OCI-LY7 (cell line): ENCODE measurements at regions of chr2 and their contacts with region 1.

Region 1: DNA sequence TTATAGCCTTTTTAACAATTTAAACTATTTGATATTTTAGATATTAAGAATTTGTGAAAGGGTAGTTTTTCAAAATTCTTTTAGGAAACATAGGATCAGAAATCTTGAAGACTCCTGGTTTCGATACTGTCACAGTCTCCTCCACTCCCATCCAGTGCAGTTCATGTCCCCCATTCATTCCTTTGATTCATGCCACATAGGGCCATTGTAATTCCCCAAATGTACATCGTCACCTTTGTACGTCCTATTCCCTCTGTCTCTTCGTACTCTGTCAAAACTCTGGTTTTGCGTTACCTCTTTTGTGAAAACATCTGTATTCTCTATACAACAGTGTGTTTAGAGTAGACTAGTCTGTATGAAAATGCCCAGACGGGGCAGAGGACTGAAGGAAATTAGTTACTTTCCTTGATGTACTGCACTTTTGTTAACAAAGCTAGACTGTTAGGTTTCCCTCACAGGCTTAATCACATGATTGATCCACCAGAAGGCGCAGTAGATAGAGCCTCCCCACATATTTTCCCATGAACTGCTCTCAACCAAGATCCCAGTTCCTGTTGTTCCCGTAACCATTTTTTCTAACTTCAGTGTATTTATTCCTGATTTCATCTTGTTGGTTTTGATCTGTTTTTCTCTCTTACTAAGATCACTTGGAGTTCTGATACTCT is 2.5 kb downstream of the MRPL35 start:
- DNase-seq: no peak
- H3K4me3 ChIP-seq: peak overlapping the region; percentile 36
- H3K27ac ChIP-seq: peak overlapping the region; percentile 28
- H3K4me1 ChIP-seq: peaks cover 51% of the 10 kb centered on the region
- CTCF ChIP-seq: no peak; the same call in 1 of the 2 replicates

Region 2: DNA sequence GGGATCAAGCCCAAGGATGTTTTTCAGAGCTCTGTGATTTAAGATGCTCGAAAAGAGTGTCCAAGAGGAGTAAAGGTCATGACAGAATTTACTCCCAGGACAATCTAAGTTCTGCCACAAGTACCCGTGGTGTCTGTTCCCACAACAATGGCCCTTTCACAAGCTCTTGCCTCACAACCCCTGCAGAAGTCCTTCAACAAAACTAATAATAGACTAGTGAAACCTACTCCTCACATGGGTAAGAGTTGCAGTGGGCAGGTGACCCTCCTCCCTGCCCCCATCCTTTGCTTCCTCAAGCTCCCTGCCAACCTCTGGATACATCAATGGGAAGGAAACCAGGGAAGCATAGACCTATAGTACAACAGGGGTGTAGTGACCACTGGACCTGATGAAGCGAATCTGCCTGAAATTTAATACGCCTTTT is 60.8 kb before region 1 on chr2:
- CTCF ChIA-PET with region 1: no interaction called
- POLR2A ChIA-PET with region 1: no interaction called
- intact Hi-C with region 1: no loop called
- DNase-seq: no peak
- H3K4me3 ChIP-seq: no peak overlapping the region
- H3K27ac ChIP-seq: no peak overlapping the region
- H3K4me1 ChIP-seq: no peaks in the 10 kb centered on the region
- CTCF ChIP-seq: no peak

Region 3: GRCh38 chr2:86185517-86186212 is 16.1 kb before region 1 on chr2:
- CTCF ChIA-PET with region 1: no interaction called
- POLR2A ChIA-PET with region 1: interaction called, 26 read pairs
- intact Hi-C with region 1: no loop called
- DNase-seq: peak; percentile 33
- H3K4me3 ChIP-seq: peak overlapping the region; percentile 13
- H3K27ac ChIP-seq: peak overlapping the region; percentile 65
- H3K4me1 ChIP-seq: peaks cover 37% of the 10 kb centered on the region
- CTCF ChIP-seq: no peak